Mammary epithelial cell (primary cell): ENCODE measurements at regions of chr3 and their contacts with region 1.

Region 1: DNA sequence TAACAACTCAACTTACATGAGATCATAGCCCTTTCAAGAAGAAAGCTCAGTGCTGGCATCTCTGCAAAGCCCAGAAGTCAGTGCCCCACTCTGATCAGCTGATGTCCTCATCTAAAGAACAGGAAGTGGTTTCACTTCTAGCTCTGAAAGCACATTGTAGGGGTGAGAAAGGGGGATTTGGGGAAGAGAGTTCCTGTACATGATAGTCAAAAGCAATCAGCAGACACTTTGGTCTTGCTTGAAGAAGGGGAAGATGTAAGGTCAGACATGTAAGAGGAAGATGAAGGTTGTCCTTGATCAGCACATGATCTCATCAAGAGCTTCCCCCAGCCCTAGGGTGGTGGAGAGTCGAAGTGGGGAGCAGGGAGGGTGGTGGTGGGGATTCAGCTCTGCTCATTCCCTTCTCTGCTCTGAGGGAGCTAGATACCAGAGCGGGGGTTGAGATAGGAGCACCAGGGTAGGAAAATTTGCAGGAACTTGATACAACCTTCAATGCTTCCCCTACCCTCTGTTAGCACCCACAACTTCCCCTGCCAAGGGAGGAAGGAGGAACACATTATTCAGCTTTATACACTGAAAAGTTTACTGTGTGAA is 76.4 kb upstream of the ETV5 start:
- DNase-seq: no peak
- H3K4me3 ChIP-seq: no peak overlapping the region
- H3K27ac ChIP-seq: no peak overlapping the region
- H3K4me1 ChIP-seq: no peaks in the 10 kb centered on the region
- H3K27me3 ChIP-seq: no peaks in the 10 kb centered on the region
- CTCF ChIP-seq: no peak

Region 2: DNA sequence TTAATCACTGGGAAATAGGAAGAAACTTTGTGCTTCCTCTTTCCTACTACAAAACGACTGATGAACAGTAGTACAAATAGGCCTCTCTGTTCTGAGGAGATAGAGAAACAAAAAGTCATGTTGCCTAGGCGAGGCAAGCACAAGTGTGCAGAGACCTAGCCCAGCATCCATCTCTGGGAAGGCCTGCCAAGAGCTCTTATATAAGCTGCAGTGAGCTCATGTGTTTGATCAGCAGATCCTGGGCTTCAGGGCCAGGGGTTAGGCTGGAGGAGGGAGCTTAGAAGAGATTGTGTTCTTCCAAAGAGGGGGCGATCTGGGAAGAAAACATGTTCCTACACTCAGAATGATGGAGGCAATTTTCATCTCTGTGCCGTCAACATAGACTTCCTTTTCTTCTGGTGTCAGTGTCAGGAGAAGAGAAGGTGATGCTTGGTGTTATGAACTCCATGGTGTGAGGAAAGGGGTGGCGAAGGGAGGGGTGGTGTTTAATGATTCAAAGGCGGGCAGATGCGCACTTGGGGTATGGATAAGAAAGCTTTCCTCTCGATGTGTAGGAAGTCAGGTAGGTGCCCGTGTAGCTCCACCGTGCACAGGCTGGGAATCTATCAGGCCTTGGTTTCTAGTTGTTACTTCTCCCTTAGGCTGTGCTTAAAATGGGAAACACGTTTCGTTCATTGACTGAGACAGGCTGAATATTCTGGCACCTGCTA is 46.9 kb before region 1 on chr3:
- CTCF ChIA-PET with region 1: no interaction called
- dilution Hi-C with region 1: loop called (anchors 5 kb)
- in situ Hi-C with region 1: no loop called
- intact Hi-C with region 1: no loop called
- DNase-seq: no peak
- H3K4me3 ChIP-seq: no peak overlapping the region
- H3K27ac ChIP-seq: no peak overlapping the region
- H3K4me1 ChIP-seq: no peaks in the 10 kb centered on the region
- H3K27me3 ChIP-seq: no peaks in the 10 kb centered on the region
- CTCF ChIP-seq: no peak

Region 3: DNA sequence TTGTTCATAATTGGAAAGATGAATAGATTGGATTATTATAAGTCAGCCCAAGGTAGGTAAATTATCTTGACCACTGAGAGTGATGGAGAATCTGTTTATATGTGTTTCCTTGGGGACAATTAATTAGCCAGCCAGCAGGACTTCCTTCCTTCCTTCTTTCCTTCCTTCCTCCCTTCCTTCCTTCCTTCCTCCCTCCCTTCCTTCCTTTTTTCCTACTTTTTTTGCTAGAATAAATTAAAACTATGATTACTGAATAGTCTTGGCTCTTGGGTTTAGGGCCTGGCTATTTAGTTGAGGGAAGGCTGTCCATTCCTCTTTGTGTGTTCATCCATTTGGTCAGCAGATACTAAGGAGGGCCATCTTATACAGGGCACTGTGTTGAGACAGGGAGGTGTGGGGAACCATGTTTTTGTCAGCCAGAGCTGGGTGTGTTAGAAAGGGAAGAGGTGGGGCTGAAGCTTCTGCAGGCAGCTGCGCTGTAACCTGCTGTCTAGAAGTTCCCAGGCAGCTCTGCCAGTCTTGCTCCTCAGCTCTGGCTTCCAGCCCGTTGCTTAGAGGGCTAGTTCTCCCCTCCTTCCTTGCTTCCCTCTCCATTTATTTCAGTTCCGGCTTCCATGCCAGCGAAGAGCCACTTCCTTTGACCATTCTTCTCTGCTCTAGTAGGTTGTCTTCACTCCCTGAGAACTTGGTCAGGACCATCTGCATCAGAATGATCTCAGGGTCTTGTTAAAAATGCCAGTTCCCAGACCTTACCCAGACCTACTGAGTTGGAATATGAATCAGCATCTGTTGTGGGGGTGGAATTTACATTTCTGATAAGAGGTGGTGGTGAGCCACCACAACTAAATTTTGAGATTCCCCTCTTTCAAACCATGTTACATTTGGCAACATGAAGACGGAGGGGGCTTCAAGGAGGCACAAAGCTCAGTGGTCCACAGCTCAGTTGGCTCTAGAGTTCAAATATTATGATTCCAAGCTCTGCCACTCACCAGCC is 62.8 kb after region 1 on chr3:
- CTCF ChIA-PET with region 1: no interaction called
- dilution Hi-C with region 1: loop called (anchors 5 kb)
- in situ Hi-C with region 1: no loop called
- intact Hi-C with region 1: no loop called
- DNase-seq: no peak
- H3K4me3 ChIP-seq: no peak overlapping the region
- H3K27ac ChIP-seq: no peak overlapping the region
- H3K4me1 ChIP-seq: no peaks in the 10 kb centered on the region
- H3K27me3 ChIP-seq: no peaks in the 10 kb centered on the region
- CTCF ChIP-seq: no peak